CD4-positive, alpha-beta T cell (primary cell): ENCODE measurements at regions of chr2 and their contacts with region 1.

Region 1: GRCh38 chr2:86105252-86105968 is at the start of gene POLR1A:
- DNase-seq: peak; percentile 67 to 93 (median 75)
- ATAC-seq: peak; percentile 75
- H3K4me3 ChIP-seq: peak within 1 kb of the TSS; percentile 80
- H3K4me3 Mint-ChIP-seq: peak within 1 kb of the TSS; percentile 89
- H3K27ac ChIP-seq: peak within 1 kb of the TSS; percentile 81 to 87
- H3K27ac Mint-ChIP-seq: peak within 1 kb of the TSS; percentile 95
- H3K4me1 ChIP-seq: peaks cover 16% of the 10 kb centered on the region
- H3K4me1 Mint-ChIP-seq: peaks cover 60% of the 10 kb centered on the region
- H3K27me3 ChIP-seq: no peaks in the 10 kb centered on the region
- H3K27me3 Mint-ChIP-seq: no peaks in the 10 kb centered on the region
- CTCF ChIP-seq: no peak
- total RNA-seq, gene POLR1A: 13.1 to 13.4 TPM

Region 2: DNA sequence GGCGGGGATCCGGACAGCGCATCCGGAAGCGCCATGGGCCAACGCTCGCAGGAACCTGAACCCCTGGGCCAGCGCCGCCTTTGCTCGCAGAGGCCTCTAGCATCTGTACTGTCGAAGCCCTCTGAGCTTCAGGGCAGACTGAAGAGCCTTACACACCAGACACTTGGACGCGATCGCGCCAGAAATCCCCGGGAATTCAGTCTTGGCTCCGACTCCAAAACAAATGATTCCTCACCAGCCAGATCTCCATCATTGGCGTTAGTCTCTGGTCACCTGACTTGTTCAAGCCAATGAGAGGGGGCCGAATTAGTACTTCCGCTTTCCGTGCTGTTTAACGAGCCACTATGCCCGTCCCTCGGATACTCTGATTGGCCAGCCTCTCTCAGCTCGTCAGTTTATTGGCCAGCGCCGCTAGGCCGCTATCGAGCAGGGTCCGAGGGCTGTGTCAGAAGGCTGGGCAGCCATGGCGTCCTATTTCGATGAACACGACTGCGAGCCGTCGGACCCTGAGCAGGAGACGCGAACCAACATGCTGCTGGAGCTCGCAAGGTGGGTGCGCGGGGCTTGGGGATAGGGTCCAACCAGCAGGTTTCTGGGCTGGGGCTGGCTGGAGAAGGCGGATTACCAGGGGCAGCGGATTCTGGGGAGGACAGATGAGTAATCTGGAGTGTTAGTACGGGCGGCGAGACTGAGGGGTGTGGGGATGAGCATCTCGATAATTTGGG is 509.9 kb before region 1 on chr2 and contains the start of gene RNF181:
- CTCF ChIA-PET with region 1: no interaction called
- POLR2A ChIA-PET with region 1: no interaction called
- intact Hi-C with region 1: loop called in 1 of 2 experiments (anchors 10 kb)
- DNase-seq: peak; percentile 75 to 97 (median 85)
- ATAC-seq: peak; percentile 99
- H3K4me3 ChIP-seq: peak within 1 kb of the TSS; percentile 94
- H3K4me3 Mint-ChIP-seq: peak within 1 kb of the TSS; percentile 94
- H3K27ac ChIP-seq: peak within 1 kb of the TSS; percentile 78 to 86
- H3K27ac Mint-ChIP-seq: peak within 1 kb of the TSS; percentile 98
- H3K4me1 ChIP-seq: peaks cover 41% of the 10 kb centered on the region
- H3K4me1 Mint-ChIP-seq: peaks cover 35% of the 10 kb centered on the region
- H3K27me3 ChIP-seq: no peaks in the 10 kb centered on the region
- H3K27me3 Mint-ChIP-seq: no peaks in the 10 kb centered on the region
- CTCF ChIP-seq: no peak
- total RNA-seq, gene RNF181: 41.5 to 43.8 TPM

Region 3: DNA sequence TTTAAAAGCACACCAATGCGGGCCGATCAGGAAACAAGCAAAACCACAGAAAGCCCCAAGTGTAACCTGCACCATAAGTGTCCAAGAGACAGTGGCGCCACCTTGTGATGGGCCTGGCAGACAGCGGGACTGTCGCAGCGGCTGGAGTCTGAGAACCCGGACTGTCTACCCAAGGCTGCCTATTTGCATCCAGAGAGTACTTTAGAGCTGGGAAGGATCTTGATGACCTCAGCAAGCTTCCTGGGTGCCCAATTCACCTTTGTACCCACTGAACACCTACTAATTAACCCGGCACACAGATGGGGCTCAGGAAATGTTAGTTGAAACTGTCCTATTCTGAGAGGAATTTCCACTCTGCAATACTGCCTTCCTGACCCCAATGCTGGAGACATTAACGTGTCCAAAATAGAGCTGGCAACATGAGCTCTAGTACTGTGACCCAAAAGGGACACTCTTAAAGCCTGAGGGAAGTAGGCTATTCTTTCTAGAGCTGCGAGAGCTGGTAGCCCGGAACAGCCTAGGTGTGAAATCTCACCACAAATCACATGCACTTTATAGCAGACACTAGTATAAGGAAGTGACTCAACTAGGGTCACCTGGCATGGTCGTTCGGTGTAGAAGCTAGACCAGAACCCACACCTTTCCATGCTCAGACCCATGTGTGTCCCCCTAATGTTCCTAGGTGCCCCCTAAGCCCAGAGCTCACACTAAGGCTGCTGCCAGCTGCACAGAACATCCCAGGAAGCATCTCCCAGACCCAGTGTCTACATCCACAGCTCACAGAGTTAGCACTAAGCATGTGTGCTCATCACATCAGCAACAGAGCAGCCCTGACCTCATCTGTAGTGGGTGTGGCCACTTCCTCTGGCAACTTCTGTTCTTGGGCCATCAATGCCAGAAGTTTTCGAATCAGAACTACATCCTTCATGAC is 25.2 kb before region 1 on chr2:
- CTCF ChIA-PET with region 1: interaction called, 11 read pairs
- POLR2A ChIA-PET with region 1: no interaction called
- intact Hi-C with region 1: no loop called
- DNase-seq: peak; percentile 73 to 90 (median 82)
- ATAC-seq: peak; percentile 81
- H3K4me3 ChIP-seq: no peak overlapping the region
- H3K4me3 Mint-ChIP-seq: peak overlapping the region; percentile 31
- H3K27ac ChIP-seq: peak overlapping the region; percentile 16 to 56
- H3K27ac Mint-ChIP-seq: peak overlapping the region; percentile 87
- H3K4me1 ChIP-seq: peaks cover 26% of the 10 kb centered on the region
- H3K4me1 Mint-ChIP-seq: peaks cover 26% of the 10 kb centered on the region
- H3K27me3 ChIP-seq: no peaks in the 10 kb centered on the region
- H3K27me3 Mint-ChIP-seq: no peaks in the 10 kb centered on the region
- CTCF ChIP-seq: peak; percentile 78

Region 4: GRCh38 chr2:86195055-86195807 is 89.8 kb after region 1 on chr2 and contains the start of gene IMMT:
- CTCF ChIA-PET with region 1: no interaction called
- POLR2A ChIA-PET with region 1: interaction called, 14 read pairs
- intact Hi-C with region 1: loop called in 1 of 2 experiments (anchors 2 kb)
- DNase-seq: peak; percentile 84 to 97 (median 90)
- ATAC-seq: peak; percentile 89
- H3K4me3 ChIP-seq: peak within 1 kb of the TSS; percentile 87
- H3K4me3 Mint-ChIP-seq: peak within 1 kb of the TSS; percentile 89
- H3K27ac ChIP-seq: peak within 1 kb of the TSS; percentile 96 to 98
- H3K27ac Mint-ChIP-seq: peak within 1 kb of the TSS; percentile 85
- H3K4me1 ChIP-seq: peaks cover 45% of the 10 kb centered on the region
- H3K4me1 Mint-ChIP-seq: peaks cover 71% of the 10 kb centered on the region
- H3K27me3 ChIP-seq: no peaks in the 10 kb centered on the region
- H3K27me3 Mint-ChIP-seq: no peaks in the 10 kb centered on the region
- CTCF ChIP-seq: no peak
- total RNA-seq, gene IMMT: 39.5 to 40.8 TPM

Region 5: DNA sequence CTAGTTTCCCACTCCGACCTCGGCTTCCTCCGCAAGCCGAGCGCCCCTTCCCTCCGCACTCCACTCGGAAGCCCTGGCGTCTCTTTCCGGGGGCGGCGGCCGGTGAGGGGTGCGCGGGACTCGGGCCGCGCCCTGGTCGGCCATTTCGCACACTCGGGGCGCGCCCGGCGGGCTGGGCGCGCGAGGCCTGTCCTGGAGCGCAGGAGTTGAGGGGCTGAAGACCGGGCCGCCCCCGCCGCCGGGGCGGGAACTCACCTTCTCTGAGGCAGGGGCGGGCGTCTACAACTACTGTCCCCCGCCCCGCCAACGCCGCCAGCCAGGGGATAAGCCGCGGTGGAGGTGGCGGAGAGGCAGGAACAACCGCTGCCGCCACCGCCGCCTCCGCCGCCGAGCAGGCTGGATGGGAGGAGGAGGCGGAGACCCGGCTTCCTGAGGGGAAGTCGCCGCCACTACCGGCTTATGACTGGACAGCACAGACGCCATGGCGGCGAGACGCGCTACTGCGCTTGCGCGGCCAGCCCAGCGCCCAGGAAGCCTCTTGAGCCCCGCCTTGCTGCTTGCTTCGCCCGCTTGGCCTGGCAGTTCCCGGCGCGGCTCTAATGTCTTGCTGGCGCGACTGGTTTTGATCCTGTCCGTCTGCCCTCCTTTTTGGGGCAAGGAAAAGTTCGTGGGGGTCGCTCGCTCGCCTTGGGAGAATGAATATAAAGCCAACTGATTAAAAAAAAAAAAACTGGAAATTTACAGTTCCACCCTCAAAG is 1950.1 kb after region 1 on chr2 and contains the start of gene KRCC1:
- CTCF ChIA-PET with region 1: no interaction called
- POLR2A ChIA-PET with region 1: no interaction called
- intact Hi-C with region 1: loop called in 1 of 2 experiments (anchors 10 kb)
- DNase-seq: peak; percentile 87 to 99 (median 94)
- ATAC-seq: peak; percentile 91
- H3K4me3 ChIP-seq: peak within 1 kb of the TSS; percentile 89
- H3K4me3 Mint-ChIP-seq: peak within 1 kb of the TSS; percentile 96
- H3K27ac ChIP-seq: peak within 1 kb of the TSS; percentile 90 to 97
- H3K27ac Mint-ChIP-seq: peak within 1 kb of the TSS; percentile 93
- H3K4me1 ChIP-seq: peaks cover 18% of the 10 kb centered on the region
- H3K4me1 Mint-ChIP-seq: peaks cover 61% of the 10 kb centered on the region
- H3K27me3 ChIP-seq: no peaks in the 10 kb centered on the region
- H3K27me3 Mint-ChIP-seq: no peaks in the 10 kb centered on the region
- CTCF ChIP-seq: no peak
- total RNA-seq, gene KRCC1: 3.0 to 3.2 TPM